B cell (primary cell): ENCODE measurements at regions of chr19 and their contacts with region 1.

Region 1: GRCh38 chr19:34171877-34172660 is at the start of gene LSM14A:
- DNase-seq: peak; percentile 97
- ATAC-seq: peak; percentile 78
- H3K4me3 ChIP-seq: peak within 1 kb of the TSS; percentile 83 to 96 (median 92)
- H3K4me3 Mint-ChIP-seq: peak within 1 kb of the TSS; percentile 97
- H3K27ac ChIP-seq: peak within 1 kb of the TSS; percentile 94 to 99
- H3K27ac Mint-ChIP-seq: peak within 1 kb of the TSS; percentile 98
- H3K4me1 ChIP-seq: peaks cover 52 to 57% of the 10 kb centered on the region in 2 donors
- H3K4me1 Mint-ChIP-seq: peaks cover 48% of the 10 kb centered on the region
- H3K27me3 ChIP-seq: no peaks in the 10 kb centered on the region
- H3K27me3 Mint-ChIP-seq: no peaks in the 10 kb centered on the region
- CTCF ChIP-seq: no peak
- total RNA-seq, gene LSM14A: 139 and 163 TPM in 2 replicates

Region 2: GRCh38 chr19:34188408-34188807 is 16.3 kb after region 1 on chr19:
- CTCF ChIA-PET with region 1: no interaction called
- POLR2A ChIA-PET with region 1: interaction called, 10 read pairs
- intact Hi-C with region 1: no loop called
- DNase-seq: no peak
- ATAC-seq: no peak
- H3K4me3 ChIP-seq: no peak overlapping the region
- H3K4me3 Mint-ChIP-seq: peak overlapping the region; percentile 2
- H3K27ac ChIP-seq: peak overlapping the region in 1 of 2 donors; percentile 4
- H3K27ac Mint-ChIP-seq: peak overlapping the region; percentile 7
- H3K4me1 ChIP-seq: peaks cover 58 to 76% of the 10 kb centered on the region in 2 donors
- H3K4me1 Mint-ChIP-seq: peaks cover 79% of the 10 kb centered on the region
- H3K27me3 ChIP-seq: no peaks in the 10 kb centered on the region
- H3K27me3 Mint-ChIP-seq: no peaks in the 10 kb centered on the region
- CTCF ChIP-seq: no peak

Region 3: GRCh38 chr19:34253699-34254551 is 81.9 kb after region 1 on chr19:
- CTCF ChIA-PET with region 1: no interaction called
- POLR2A ChIA-PET with region 1: no interaction called
- intact Hi-C with region 1: loop called (anchors 10 kb)
- DNase-seq: peak; percentile 87
- ATAC-seq: peak; percentile 20
- H3K4me3 ChIP-seq: peak overlapping the region; percentile 83 to 93 (median 86)
- H3K4me3 Mint-ChIP-seq: peak overlapping the region; percentile 95
- H3K27ac ChIP-seq: peak overlapping the region; percentile 91 to 92
- H3K27ac Mint-ChIP-seq: peak overlapping the region; percentile 97
- H3K4me1 ChIP-seq: peaks cover 13 to 23% of the 10 kb centered on the region in 2 donors
- H3K4me1 Mint-ChIP-seq: peaks cover 28% of the 10 kb centered on the region
- H3K27me3 ChIP-seq: no peaks in the 10 kb centered on the region
- H3K27me3 Mint-ChIP-seq: no peaks in the 10 kb centered on the region
- CTCF ChIP-seq: no peak

Region 4: DNA sequence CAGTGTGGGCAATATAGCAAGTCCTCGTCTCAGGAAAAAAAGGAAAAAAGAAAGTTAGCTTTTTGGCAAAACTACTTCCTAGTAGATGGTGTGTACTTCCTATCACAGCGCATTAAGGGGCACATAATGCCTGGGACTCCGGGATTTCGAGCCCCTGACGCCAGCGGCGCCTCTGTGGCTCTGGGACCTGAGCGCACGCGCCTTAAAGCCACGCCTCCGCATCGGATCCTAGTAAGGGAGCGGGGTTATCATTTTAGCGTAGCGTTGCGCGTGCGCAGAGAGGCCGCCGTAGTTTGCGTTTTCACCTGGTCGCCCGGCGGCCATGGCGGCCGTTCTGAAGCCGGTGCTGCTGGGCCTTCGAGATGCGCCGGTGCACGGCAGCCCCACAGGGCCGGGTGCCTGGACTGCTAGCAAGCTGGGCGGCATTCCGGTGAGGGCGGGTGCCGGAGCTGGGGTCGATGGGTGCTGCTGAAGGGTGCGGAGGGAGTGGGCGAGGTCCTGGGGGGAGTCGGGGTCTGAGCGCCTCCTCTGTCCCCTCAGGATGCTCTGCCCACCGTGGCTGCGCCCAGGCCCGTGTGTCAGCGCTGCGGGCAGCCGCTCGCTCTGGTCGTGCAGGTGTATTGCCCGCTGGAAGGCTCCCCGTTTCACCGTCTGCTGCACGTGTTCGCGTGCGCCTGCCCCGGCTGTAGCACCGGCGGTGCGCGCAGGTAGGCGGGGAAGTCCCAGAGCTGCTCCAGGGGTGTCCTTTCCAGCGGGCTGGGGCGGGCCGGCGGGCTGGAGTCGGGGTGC is 232.2 kb after region 1 on chr19 and contains the start of gene PDCD2L:
- CTCF ChIA-PET with region 1: no interaction called
- POLR2A ChIA-PET with region 1: no interaction called
- intact Hi-C with region 1: loop called (anchors 1 kb)
- DNase-seq: peak; percentile 94
- ATAC-seq: peak; percentile 95
- H3K4me3 ChIP-seq: peak within 1 kb of the TSS; percentile 57 to 99 (median 97)
- H3K4me3 Mint-ChIP-seq: peak within 1 kb of the TSS; percentile 95
- H3K27ac ChIP-seq: peak within 1 kb of the TSS; percentile 46 to 55
- H3K27ac Mint-ChIP-seq: peak within 1 kb of the TSS; percentile 86
- H3K4me1 ChIP-seq: peaks cover 0 to 17% of the 10 kb centered on the region in 2 donors
- H3K4me1 Mint-ChIP-seq: peaks cover 20% of the 10 kb centered on the region
- H3K27me3 ChIP-seq: no peaks in the 10 kb centered on the region
- H3K27me3 Mint-ChIP-seq: no peaks in the 10 kb centered on the region
- CTCF ChIP-seq: no peak
- total RNA-seq, gene PDCD2L: 11.3 and 12.6 TPM in 2 replicates